Mammary epithelial cell (primary cell): ENCODE measurements at regions of chr2 and their contacts with region 1.

Region 1: DNA sequence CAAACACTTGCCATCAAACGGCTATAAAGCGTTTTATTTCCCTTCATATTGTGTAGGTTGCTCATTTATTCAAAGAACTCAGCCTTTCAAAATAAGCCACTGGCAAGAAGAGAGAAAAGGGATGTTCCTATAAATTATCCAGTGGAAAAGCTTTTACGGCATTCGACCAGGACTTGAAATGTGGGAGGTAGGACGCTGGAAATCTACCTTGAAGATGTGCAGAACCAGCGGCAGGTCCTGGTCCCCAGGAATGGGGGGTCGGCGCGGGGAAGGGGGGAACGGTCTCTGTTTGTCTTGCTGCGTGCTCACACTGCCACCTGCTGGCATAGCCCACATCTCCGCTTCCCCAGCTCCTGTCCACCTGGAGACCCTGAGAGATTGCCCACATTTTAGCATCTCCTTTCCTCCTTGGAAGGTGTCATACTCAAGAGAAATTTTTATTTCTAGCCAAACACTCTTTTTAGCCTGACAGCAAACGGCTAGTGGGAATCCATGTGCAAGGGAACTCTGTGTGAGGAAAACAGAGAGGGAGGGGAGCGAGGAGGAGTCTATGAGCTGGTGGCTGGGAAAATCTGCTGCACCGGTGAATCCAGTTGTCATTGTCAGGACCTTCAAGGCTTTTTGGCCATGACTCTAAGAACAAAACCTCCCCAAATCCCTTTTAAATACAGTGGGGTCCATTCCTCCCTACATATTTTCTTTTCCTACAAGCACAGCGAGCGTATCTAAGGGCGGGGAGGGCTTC is 349.0 kb upstream of the PKDCC start:
- DNase-seq: no peak
- H3K4me3 ChIP-seq: no peak overlapping the region
- H3K27ac ChIP-seq: no peak overlapping the region
- H3K4me1 ChIP-seq: no peaks in the 10 kb centered on the region
- H3K27me3 ChIP-seq: no peaks in the 10 kb centered on the region
- CTCF ChIP-seq: peak; percentile 51 to 80

Region 2: GRCh38 chr2:41414486-41415230 is 284.2 kb before region 1 on chr2:
- CTCF ChIA-PET with region 1: no interaction called
- dilution Hi-C with region 1: no loop called
- in situ Hi-C with region 1: no loop called
- intact Hi-C with region 1: loop called (anchors 1 kb)
- DNase-seq: peak; percentile 40
- H3K4me3 ChIP-seq: no peak overlapping the region
- H3K27ac ChIP-seq: no peak overlapping the region
- H3K4me1 ChIP-seq: no peaks in the 10 kb centered on the region
- H3K27me3 ChIP-seq: no peaks in the 10 kb centered on the region
- CTCF ChIP-seq: peak; percentile 65 to 76